PC-3 (cell line): ENCODE measurements at regions of chr1 and their contacts with region 1.

Region 1: GRCh38 chr1:202315576-202316168 is 26.1 kb downstream of the UBE2T start:
- DNase-seq: peak; percentile 73
- ATAC-seq: peak; percentile 91
- H3K4me3 ChIP-seq: no peak overlapping the region
- H3K27ac ChIP-seq: no peak overlapping the region
- H3K4me1 ChIP-seq: no peaks in the 10 kb centered on the region
- H3K27me3 ChIP-seq: no peaks in the 10 kb centered on the region
- CTCF ChIP-seq: peak; percentile 93

Region 2: GRCh38 chr1:202056644-202057461 is 258.8 kb before region 1 on chr1:
- CTCF ChIA-PET with region 1: no interaction called
- POLR2A ChIA-PET with region 1: no interaction called
- intact Hi-C with region 1: no loop called
- DNase-seq: peak; percentile 83
- ATAC-seq: peak; percentile 89
- H3K4me3 ChIP-seq: no peak overlapping the region
- H3K27ac ChIP-seq: peak overlapping the region; percentile 98
- H3K4me1 ChIP-seq: peaks cover 23% of the 10 kb centered on the region
- H3K27me3 ChIP-seq: no peaks in the 10 kb centered on the region
- CTCF ChIP-seq: no peak

Region 3: GRCh38 chr1:202192770-202193613 is 122.7 kb before region 1 on chr1:
- CTCF ChIA-PET with region 1: no interaction called
- POLR2A ChIA-PET with region 1: no interaction called
- intact Hi-C with region 1: loop called (anchors 1 kb)
- DNase-seq: peak; percentile 58
- ATAC-seq: peak; percentile 49
- H3K4me3 ChIP-seq: no peak overlapping the region
- H3K27ac ChIP-seq: no peak overlapping the region
- H3K4me1 ChIP-seq: no peaks in the 10 kb centered on the region
- H3K27me3 ChIP-seq: peaks cover 5% of the 10 kb centered on the region; the same call in 1 of the 2 replicates
- CTCF ChIP-seq: peak; percentile 79

Region 4: DNA sequence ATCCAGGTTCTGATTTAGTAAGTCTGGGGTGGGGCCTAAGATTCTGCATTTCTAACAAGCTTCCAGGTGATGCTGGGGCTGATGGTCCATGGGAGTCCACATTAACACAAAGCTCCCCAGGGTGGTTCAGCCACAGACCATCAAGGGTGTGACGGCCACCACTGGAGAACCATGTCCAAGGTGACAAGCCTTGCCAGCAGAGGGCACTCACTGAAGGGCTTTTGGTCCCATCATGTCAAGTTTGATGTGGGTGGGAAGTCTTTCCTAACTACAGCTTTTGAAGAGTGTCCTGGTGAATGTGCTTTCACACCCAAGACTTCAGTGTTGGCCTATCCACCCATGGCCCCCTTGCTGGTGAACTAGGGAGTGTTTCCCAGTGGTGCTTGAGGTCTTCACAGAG is 41.1 kb before region 1 on chr1:
- CTCF ChIA-PET with region 1: no interaction called
- POLR2A ChIA-PET with region 1: no interaction called
- intact Hi-C with region 1: loop called (anchors 1 kb)
- DNase-seq: peak; percentile 51
- ATAC-seq: peak; percentile 80
- H3K4me3 ChIP-seq: no peak overlapping the region
- H3K27ac ChIP-seq: no peak overlapping the region
- H3K4me1 ChIP-seq: peaks cover 2% of the 10 kb centered on the region; the same call in 1 of the 2 replicates
- H3K27me3 ChIP-seq: no peaks in the 10 kb centered on the region
- CTCF ChIP-seq: peak; percentile 70